ENCODE measurements at regions of chr7 and their contacts with region 1.

Region 1: GRCh38 chr7:68321064-68321639 is 1277.1 kb upstream of the AUTS2 start:
- DNase-seq: peak; percentile 48 to 67
- ATAC-seq: peak; percentile 93 to 99 (median 96)
- H3K4me3 ChIP-seq: peak overlapping the region in 3 of 10 donors; percentile 3 to 15 (median 10)
- H3K27ac ChIP-seq: peak overlapping the region; percentile 15 to 85 (median 74)
- H3K4me1 ChIP-seq: peaks cover 14 to 40% (median 29%) of the 10 kb centered on the region in 9 donors
- H3K27me3 ChIP-seq: no peaks in the 10 kb centered on the region
- CTCF ChIP-seq: peak in 2 of 9 donors; percentile 6 to 7

Region 2: DNA sequence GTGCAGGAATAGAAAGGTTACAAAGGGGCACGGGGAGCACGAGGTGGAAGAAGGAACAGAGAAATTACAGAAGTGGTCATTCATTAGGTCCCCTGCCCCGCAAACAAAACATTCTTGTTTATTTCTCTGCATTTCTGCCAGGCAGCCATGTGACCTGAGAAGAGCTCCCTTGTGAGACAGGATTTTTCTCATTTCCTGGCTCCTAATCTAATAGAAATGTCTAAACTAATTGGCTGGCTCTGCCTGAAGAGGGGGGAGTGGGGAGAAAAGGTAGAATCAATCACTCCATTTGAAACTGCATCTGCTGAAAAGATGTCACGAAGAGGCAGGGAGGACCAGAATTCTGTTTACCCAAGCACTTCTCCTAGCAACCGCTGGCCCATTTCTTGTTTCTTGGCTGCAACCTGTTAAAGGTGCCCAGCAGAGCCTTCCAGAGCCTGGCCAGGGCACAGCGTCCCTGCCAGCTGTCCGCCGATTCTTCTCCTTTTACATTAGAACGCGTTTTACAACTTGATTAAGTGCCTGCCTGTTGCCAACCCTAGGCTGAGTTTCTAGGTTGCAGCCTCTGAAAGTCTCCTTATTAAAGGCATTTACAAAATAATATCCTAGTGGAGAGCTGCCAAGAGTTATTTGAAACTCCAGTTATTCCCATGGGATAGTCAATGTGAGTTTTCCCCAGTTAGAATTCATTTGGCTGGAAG is 97.0 kb before region 1 on chr7:
- intact Hi-C with region 1: no loop called
- DNase-seq: no peak
- ATAC-seq: no peak
- H3K4me3 ChIP-seq: no peak overlapping the region
- H3K27ac ChIP-seq: no peak overlapping the region
- H3K4me1 ChIP-seq: peaks cover 0 to 8% (median 0%) of the 10 kb centered on the region in 9 donors
- H3K27me3 ChIP-seq: peaks cover 0 to 16% (median 0%) of the 10 kb centered on the region in 7 donors
- CTCF ChIP-seq: no peak

Region 3: DNA sequence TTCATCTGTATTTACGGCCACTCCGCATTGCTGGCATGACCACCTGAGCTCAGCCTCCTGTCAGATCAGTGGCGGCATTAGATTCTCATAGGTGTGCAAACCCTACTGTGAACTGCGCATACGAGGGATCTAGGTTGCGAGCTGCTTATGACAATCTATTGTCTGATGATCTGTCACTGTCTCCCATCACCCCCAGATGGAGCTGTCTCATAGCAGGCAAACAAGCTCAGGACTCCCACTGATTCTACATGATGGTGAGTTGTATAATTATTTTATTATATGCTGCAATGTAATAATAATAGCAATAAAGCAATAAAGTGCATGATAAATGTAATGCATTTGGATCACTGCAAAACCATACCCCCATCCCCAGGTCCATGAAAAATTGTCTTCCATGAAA is 104.2 kb after region 1 on chr7:
- intact Hi-C with region 1: loop called in 1 of 10 experiments (anchors 2 kb)
- DNase-seq: no peak
- ATAC-seq: no peak
- H3K4me3 ChIP-seq: no peak overlapping the region
- H3K27ac ChIP-seq: no peak overlapping the region
- H3K4me1 ChIP-seq: peaks cover 0 to 8% (median 0%) of the 10 kb centered on the region in 9 donors
- H3K27me3 ChIP-seq: no peaks in the 10 kb centered on the region
- CTCF ChIP-seq: peak in 6 of 9 donors; percentile 9 to 31 (median 21)

Region 4: GRCh38 chr7:70241536-70242175 is 1920.5 kb after region 1 on chr7:
- intact Hi-C with region 1: loop called in 1 of 10 experiments (anchors 10 kb)
- DNase-seq: no peak
- ATAC-seq: no peak
- H3K4me3 ChIP-seq: no peak overlapping the region
- H3K27ac ChIP-seq: no peak overlapping the region
- H3K4me1 ChIP-seq: peaks cover 0 to 7% (median 0%) of the 10 kb centered on the region in 9 donors
- H3K27me3 ChIP-seq: no peaks in the 10 kb centered on the region
- CTCF ChIP-seq: no peak